Calu3 (cell line): ENCODE measurements at regions of chr5 and their contacts with region 1.

Region 1: DNA sequence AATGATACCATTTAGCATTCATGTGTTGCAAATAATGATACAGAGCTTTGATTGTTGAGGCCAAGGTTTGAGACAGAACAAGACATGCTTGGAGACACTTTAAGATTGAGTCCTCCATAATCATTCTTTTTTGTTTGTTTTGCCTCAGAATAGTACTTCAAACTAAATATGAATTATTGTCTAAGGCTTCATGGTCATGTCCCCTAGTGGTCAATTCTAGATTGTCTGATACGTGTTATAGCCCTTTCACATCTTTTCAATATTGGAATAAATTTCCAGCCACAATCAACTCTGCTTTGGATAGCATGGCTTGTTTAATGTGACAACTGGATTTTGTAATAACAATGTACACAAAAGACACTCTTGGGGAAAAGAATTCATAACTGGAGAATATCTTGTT is 64.2 kb downstream of the PRLR start:
- DNase-seq: no peak
- H3K4me3 Mint-ChIP-seq: no peak overlapping the region
- H3K27ac Mint-ChIP-seq: no peak overlapping the region
- H3K4me1 Mint-ChIP-seq: no peaks in the 10 kb centered on the region
- H3K27me3 Mint-ChIP-seq: no peaks in the 10 kb centered on the region
- CTCF ChIP-seq: no peak

Region 2: GRCh38 chr5:34517249-34517648 is 648.8 kb before region 1 on chr5:
- CTCF ChIA-PET with region 1: no interaction called
- intact Hi-C with region 1: no loop called
- DNase-seq: no peak
- H3K4me3 Mint-ChIP-seq: no peak overlapping the region
- H3K27ac Mint-ChIP-seq: no peak overlapping the region
- H3K4me1 Mint-ChIP-seq: peaks cover 12% of the 10 kb centered on the region
- H3K27me3 Mint-ChIP-seq: no peaks in the 10 kb centered on the region
- CTCF ChIP-seq: no peak

Region 3: DNA sequence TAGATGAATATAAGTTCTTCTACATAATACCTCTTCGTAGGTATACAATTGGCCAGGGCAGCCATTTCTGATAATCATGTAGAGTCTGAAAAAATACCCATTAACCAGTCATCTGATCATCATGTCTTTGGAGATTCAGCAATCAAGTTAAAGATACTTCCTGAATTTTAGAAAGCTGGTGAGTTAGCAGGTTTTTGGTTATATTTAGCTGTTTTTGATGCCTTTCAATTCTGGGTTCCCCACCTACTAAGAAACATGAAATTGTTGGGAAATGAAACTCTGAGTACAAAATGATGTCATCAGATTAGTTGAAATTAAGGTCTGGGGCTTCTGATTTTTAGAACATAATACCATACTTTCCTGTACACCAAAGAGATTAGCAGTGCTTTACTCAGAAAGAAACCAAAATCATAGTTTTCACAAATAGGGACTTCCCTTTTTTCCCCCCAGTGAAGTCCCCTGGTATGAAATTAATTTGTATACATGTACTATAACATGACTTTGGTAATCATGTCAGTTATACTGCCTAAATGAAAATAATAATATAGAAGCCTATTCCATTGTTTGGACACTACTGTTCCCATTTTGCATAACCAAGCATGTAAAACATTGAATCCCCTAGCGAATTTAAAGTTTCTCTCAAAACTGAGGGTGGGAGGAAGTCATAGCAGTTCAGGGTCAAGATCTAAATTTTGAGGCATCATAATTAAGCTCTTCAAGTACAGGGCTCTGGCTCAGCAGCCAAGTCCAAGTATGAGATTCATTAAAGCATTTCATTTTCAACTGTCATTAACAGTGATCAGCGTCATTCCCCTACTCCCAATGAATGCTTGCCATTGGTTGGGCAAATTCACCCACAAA is 46.3 kb after region 1 on chr5:
- CTCF ChIA-PET with region 1: no interaction called
- intact Hi-C with region 1: loop called (anchors 1 kb)
- DNase-seq: no peak
- H3K4me3 Mint-ChIP-seq: no peak overlapping the region
- H3K27ac Mint-ChIP-seq: no peak overlapping the region
- H3K4me1 Mint-ChIP-seq: no peaks in the 10 kb centered on the region
- H3K27me3 Mint-ChIP-seq: no peaks in the 10 kb centered on the region
- CTCF ChIP-seq: no peak

Region 4: GRCh38 chr5:35617435-35618303 is 451.6 kb after region 1 on chr5 and contains the start of gene SPEF2:
- CTCF ChIA-PET with region 1: no interaction called
- intact Hi-C with region 1: no loop called
- DNase-seq: peak; percentile 86
- H3K4me3 Mint-ChIP-seq: peak within 1 kb of the TSS; percentile 88
- H3K27ac Mint-ChIP-seq: peak within 1 kb of the TSS; percentile 92
- H3K4me1 Mint-ChIP-seq: peaks cover 9% of the 10 kb centered on the region
- H3K27me3 Mint-ChIP-seq: no peaks in the 10 kb centered on the region
- CTCF ChIP-seq: peak; percentile 66
- total RNA-seq, gene SPEF2: 8.0 and 10.9 TPM in 2 replicates